GM12878 (cell line): ENCODE measurements at regions of chr10 and their contacts with region 1.

Region 1: GRCh38 chr10:75547391-75548298 is 116.2 kb downstream of the LRMDA start:
- DNase-seq: peak; percentile 33
- ATAC-seq: peak; percentile 95
- H3K4me3 ChIP-seq: no peak overlapping the region
- H3K27ac ChIP-seq: no peak overlapping the region
- H3K4me1 ChIP-seq: no peaks in the 10 kb centered on the region
- H3K27me3 ChIP-seq: no peaks in the 10 kb centered on the region
- CTCF ChIP-seq: no peak
- EP300 ChIP-seq: 0 out of 4 replicates have a peak, but pooled peaks of 1 of the 2 experiments have one; percentile 13
- POLR2A ChIP-seq: no peak
- RAD21 ChIP-seq: no peak

Region 2: DNA sequence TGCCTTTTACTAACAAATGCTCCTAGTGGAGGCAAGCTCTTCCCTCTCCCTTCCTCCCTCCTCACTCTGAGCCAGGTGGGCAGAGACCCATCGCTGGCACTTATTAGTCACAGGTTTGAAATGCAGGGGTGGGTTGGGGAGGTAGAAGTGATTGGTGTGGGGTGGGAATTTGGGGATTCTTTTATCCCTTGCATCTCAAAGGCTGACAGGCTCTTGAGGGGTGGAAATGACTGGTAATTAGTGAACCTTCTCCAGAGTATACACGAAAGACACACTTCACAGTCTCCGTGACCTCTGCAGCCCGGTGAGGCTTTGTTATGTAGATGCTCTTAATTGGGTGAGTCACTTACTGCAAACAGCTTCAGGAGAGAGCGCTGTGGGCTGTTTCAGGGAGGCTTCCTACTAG is 130.1 kb before region 1 on chr10:
- CTCF ChIA-PET with region 1: no interaction called
- POLR2A ChIA-PET with region 1: no interaction called
- RAD21 ChIA-PET with region 1: no interaction called
- SMC1A ChIA-PET with region 1: no interaction called
- in situ Hi-C with region 1: no loop called
- intact Hi-C with region 1: no loop called
- DNase-seq: no peak
- ATAC-seq: no peak
- H3K4me3 ChIP-seq: no peak overlapping the region
- H3K27ac ChIP-seq: no peak overlapping the region
- H3K4me1 ChIP-seq: no peaks in the 10 kb centered on the region
- H3K27me3 ChIP-seq: no peaks in the 10 kb centered on the region; a peak in 1 of 4 replicates
- CTCF ChIP-seq: no peak
- EP300 ChIP-seq: no peak
- POLR2A ChIP-seq: no peak
- RAD21 ChIP-seq: no peak

Region 3: DNA sequence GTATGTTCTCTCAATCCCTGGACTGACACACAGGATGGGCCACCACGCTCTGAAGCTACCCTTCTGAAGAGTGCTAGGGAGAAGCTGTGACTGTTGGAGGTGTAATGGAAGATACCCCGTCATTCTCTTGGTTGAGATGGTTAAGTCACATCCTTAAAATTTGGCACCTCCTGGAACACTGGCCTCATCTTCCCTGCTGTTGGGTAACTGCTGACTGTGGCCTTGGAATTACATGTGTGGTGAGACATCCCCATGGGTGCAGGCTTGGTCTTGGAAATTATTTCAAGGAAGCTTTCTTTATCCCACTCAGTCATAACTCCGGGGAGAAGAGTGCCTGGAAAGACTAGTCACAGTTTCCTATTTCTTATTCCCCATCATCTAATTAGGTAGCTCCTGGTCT is 54.2 kb before region 1 on chr10:
- CTCF ChIA-PET with region 1: no interaction called
- POLR2A ChIA-PET with region 1: no interaction called
- RAD21 ChIA-PET with region 1: no interaction called
- SMC1A ChIA-PET with region 1: no interaction called
- in situ Hi-C with region 1: no loop called
- intact Hi-C with region 1: no loop called
- DNase-seq: no peak
- ATAC-seq: no peak
- H3K4me3 ChIP-seq: no peak overlapping the region
- H3K27ac ChIP-seq: no peak overlapping the region
- H3K4me1 ChIP-seq: no peaks in the 10 kb centered on the region
- H3K27me3 ChIP-seq: no peaks in the 10 kb centered on the region
- CTCF ChIP-seq: no peak
- EP300 ChIP-seq: no peak
- POLR2A ChIP-seq: no peak
- RAD21 ChIP-seq: no peak

Region 4: GRCh38 chr10:75508239-75508813 is 39.3 kb before region 1 on chr10:
- CTCF ChIA-PET with region 1: no interaction called
- POLR2A ChIA-PET with region 1: no interaction called
- RAD21 ChIA-PET with region 1: interaction called, 18 read pairs
- SMC1A ChIA-PET with region 1: interaction called, 11 read pairs
- in situ Hi-C with region 1: no loop called
- intact Hi-C with region 1: no loop called
- DNase-seq: no peak
- ATAC-seq: no peak
- H3K4me3 ChIP-seq: no peak overlapping the region
- H3K27ac ChIP-seq: no peak overlapping the region
- H3K4me1 ChIP-seq: peaks cover 12% of the 10 kb centered on the region
- H3K27me3 ChIP-seq: peaks cover 0 to 2% of the 10 kb centered on the region in 2 experiments; a peak in 1 of 4 replicates
- CTCF ChIP-seq: no peak
- EP300 ChIP-seq: no peak
- POLR2A ChIP-seq: no peak
- RAD21 ChIP-seq: no peak

Region 5: DNA sequence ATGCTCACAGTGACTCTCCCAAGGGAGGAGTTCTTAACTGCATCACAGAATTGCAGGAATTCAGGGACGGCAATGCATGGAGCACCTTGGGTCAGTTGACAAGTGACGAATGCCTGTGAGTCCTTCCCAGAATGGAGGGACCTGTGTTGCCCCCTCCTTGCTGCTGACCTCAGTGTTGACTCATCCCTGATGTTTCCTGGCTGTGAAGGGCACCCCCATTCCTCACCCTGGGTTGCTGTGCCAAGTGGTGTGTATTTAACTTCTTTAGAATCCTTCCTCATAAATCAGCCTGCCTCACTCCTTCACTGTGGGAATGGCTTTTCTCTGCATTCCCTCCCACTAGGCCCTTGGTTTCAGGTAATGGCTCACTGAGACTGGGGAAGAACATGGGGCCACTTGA is 17.3 kb before region 1 on chr10:
- CTCF ChIA-PET with region 1: interaction called, 13 read pairs
- POLR2A ChIA-PET with region 1: interaction called, 4 read pairs
- RAD21 ChIA-PET with region 1: no interaction called
- SMC1A ChIA-PET with region 1: interaction called, 5 read pairs
- in situ Hi-C with region 1: no loop called
- intact Hi-C with region 1: no loop called
- DNase-seq: no peak
- ATAC-seq: no peak
- H3K4me3 ChIP-seq: no peak overlapping the region
- H3K27ac ChIP-seq: no peak overlapping the region
- H3K4me1 ChIP-seq: no peaks in the 10 kb centered on the region
- H3K27me3 ChIP-seq: no peaks in the 10 kb centered on the region
- CTCF ChIP-seq: no peak
- EP300 ChIP-seq: no peak
- POLR2A ChIP-seq: no peak
- RAD21 ChIP-seq: no peak

Region 6: GRCh38 chr10:75568450-75569130 is 20.9 kb after region 1 on chr10:
- CTCF ChIA-PET with region 1: interaction called, 3 read pairs
- POLR2A ChIA-PET with region 1: interaction called, 4 read pairs
- RAD21 ChIA-PET with region 1: interaction called, 5 read pairs
- SMC1A ChIA-PET with region 1: interaction called, 22 read pairs
- in situ Hi-C with region 1: no loop called
- intact Hi-C with region 1: no loop called
- DNase-seq: no peak
- ATAC-seq: peak; percentile 60
- H3K4me3 ChIP-seq: no peak overlapping the region
- H3K27ac ChIP-seq: no peak overlapping the region
- H3K4me1 ChIP-seq: no peaks in the 10 kb centered on the region
- H3K27me3 ChIP-seq: no peaks in the 10 kb centered on the region
- CTCF ChIP-seq: no peak
- EP300 ChIP-seq: no peak
- POLR2A ChIP-seq: no peak
- RAD21 ChIP-seq: no peak